ENCODE measurements at regions of chr13 and their contacts with region 1.

Region 1: DNA sequence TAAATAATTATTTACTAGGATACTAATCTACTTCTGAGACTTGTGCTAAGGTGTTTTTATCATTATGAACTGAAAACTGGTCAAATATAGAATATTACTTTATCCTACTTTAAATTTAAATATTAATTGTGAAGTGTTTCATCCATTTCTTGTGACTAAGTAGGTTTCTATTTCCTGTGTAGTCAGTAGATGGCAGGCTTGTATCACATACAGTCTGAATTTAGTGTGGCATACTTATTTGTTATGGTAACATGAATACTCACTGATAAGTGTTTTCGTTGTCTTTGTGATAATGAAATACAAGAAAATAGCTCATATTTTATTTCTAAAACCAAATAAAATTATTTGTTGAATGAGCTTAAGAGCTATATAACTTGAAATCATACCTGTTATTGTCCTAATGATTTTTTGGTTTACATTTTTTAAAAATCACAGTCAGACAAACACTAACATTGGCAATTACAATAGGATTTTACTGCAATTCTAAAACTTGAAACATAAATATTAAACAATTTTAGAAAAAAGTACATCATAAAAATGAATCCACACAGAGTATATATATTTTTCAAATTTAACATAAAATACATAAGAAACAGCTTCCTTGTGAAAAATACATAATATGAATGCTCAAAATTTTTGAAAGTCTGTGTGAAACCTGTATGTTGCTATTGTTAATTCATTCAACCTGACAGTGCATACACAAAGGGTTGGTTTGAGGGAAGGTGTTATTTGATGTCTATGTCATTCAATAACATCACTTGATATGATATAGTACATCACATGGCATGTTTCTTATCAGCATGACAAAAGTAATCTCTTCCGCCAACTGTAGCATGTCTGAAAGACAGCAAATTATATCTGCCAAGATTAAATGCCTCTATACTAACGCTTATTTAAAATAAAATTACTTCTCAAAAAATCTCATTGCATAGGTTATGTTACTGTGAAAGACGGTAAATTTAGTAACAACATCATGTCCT is 904.8 kb upstream of the PCDH20 start:
- DNase-seq: peak; percentile 36
- ATAC-seq: peak; percentile 85
- H3K4me3 ChIP-seq: no peak overlapping the region
- H3K27ac ChIP-seq: no peak overlapping the region
- H3K4me1 ChIP-seq: no peaks in the 10 kb centered on the region
- H3K27me3 ChIP-seq: no peaks in the 10 kb centered on the region
- CTCF ChIP-seq: peak; percentile 50 to 66 (median 55); a peak in 5 of 6 replicates
- EP300 ChIP-seq: no peak
- POLR2A ChIP-seq: no peak
- RAD21 ChIP-seq: peak; percentile 92

Region 2: GRCh38 chr13:62193919-62194318 is 126.5 kb before region 1 on chr13:
- CTCF ChIA-PET with region 1: no interaction called
- POLR2A ChIA-PET with region 1: no interaction called
- RAD21 ChIA-PET with region 1: no interaction called
- SMC1A ChIA-PET with region 1: no interaction called
- in situ Hi-C with region 1: no loop called
- intact Hi-C with region 1: no loop called
- DNase-seq: no peak
- ATAC-seq: no peak
- H3K4me3 ChIP-seq: no peak overlapping the region
- H3K27ac ChIP-seq: no peak overlapping the region
- H3K4me1 ChIP-seq: no peaks in the 10 kb centered on the region
- H3K27me3 ChIP-seq: no peaks in the 10 kb centered on the region
- CTCF ChIP-seq: no peak
- EP300 ChIP-seq: no peak
- POLR2A ChIP-seq: no peak
- RAD21 ChIP-seq: no peak

Region 3: GRCh38 chr13:62305756-62306155 is 14.7 kb before region 1 on chr13:
- CTCF ChIA-PET with region 1: interaction called, 15 read pairs
- POLR2A ChIA-PET with region 1: no interaction called
- RAD21 ChIA-PET with region 1: interaction called, 3 read pairs
- SMC1A ChIA-PET with region 1: interaction called, 8 read pairs
- in situ Hi-C with region 1: no loop called
- intact Hi-C with region 1: no loop called
- DNase-seq: peak; percentile 51
- ATAC-seq: peak; percentile 95
- H3K4me3 ChIP-seq: peak overlapping the region; percentile 13; the same call in 1 of the 2 replicates
- H3K27ac ChIP-seq: peak overlapping the region; percentile 69
- H3K4me1 ChIP-seq: peaks cover 12% of the 10 kb centered on the region
- H3K27me3 ChIP-seq: no peaks in the 10 kb centered on the region
- CTCF ChIP-seq: no peak
- EP300 ChIP-seq: no peak
- POLR2A ChIP-seq: no peak
- RAD21 ChIP-seq: 0 out of 2 replicates have a peak, but pooled peaks have one; percentile 9